Heart left ventricle (tissue), 16 donors: ENCODE measurements at regions of chr9 and their contacts with region 1.

Region 1: DNA sequence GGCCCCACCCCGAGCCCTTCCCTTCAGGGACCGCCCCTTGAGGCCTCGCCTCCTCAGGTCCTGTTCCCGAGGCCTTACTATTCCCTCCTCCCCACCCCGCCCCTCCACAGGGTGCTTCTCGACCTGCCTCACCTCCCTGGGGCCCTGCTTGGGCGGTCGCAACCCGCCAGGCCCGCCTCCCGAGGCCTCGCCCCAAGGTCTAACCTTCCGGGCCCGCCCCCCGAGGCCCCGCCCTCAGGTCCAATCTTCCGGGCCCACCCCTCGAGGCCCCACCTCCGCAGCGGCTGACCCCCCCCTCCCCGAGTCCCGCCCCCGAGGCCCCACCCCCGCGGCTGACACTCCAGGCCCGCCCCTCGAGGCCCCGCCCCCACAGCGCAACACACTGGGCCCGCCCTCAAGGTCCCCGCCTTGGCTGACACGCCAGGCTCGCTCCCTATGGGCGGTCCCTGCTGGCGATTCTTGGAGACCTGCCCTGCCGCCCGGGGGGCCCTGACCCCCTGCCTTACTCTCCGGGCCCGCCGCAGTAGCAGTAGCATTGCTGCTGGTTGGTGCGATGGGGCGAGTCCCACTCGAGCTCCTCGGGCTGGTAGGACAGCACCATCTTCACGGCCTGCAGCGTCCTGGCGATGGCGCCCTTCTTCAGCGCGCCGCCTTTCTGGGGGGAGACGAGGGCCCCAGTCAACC is 8.2 kb downstream of the PHF19 start:
- DNase-seq: peak; percentile 95 to 97 (median 96)
- ATAC-seq: peak; percentile 88 to 97 (median 95)
- H3K4me3 ChIP-seq: peak overlapping the region; percentile 26 to 87 (median 58)
- H3K27ac ChIP-seq: peak overlapping the region; percentile 69 to 93 (median 84)
- H3K4me1 ChIP-seq: peaks cover 0 to 20% (median 2%) of the 10 kb centered on the region in 12 donors
- H3K27me3 ChIP-seq: no peaks in the 10 kb centered on the region
- CTCF ChIP-seq: peak in 9 of 12 donors; percentile 28 to 76 (median 44)
- POLR2A ChIP-seq: no peak

Region 2: DNA sequence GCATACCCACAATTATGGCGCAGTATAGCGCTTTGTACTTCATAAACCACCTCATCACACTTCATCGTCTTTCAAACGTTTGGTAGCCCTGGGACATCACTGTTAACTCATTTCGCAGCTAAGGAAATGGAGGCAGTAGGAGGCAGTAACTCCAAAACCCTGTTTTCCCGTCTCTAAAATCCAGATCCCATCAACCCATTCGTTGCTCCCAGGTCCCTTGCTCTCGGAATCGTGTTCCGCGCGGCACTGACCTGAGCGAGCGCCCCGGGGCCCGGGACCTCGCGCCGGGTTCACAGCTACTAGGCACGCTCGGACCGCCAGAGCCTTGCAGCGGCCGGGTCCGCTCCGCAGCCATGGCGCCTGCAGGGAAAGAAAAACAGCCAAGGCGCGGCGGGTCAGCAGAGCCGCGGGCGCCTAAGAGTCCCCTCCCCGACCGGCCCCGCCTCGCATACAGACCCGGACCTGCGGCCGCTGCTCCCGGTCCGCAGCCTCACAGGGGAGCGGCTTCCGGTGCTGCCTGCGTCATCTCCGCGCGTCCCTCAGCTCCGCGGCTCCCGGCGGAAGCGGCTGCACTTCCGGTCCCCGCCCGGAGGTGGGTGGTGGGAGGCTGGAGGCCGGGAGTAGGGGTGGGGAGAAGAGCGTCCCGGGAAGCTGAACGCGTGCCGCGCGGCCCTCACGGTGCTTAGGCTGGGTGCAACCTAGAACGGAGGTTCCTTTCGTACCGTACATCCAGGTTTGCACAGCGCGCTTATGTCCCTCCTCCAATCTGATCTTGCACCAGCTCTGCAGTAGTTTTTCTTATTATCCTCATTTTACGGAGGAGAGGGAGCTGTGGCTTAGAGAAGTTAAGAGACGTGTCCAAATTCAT is 75.7 kb before region 1 on chr9 and contains the start of gene FBXW2:
- intact Hi-C with region 1: loop called in 1 of 10 experiments (anchors 1 kb)
- DNase-seq: peak; percentile 94 to 96 (median 95)
- ATAC-seq: peak; percentile 100
- H3K4me3 ChIP-seq: peak within 1 kb of the TSS; percentile 64 to 97 (median 82)
- H3K27ac ChIP-seq: peak within 1 kb of the TSS; percentile 45 to 96 (median 90)
- H3K4me1 ChIP-seq: peaks cover 3 to 51% (median 26%) of the 10 kb centered on the region in 12 donors
- H3K27me3 ChIP-seq: no peaks in the 10 kb centered on the region
- CTCF ChIP-seq: peak in 1 of 12 donors; percentile 6
- POLR2A ChIP-seq: peak in 1 of 2 donors; percentile 91
- total RNA-seq, gene FBXW2: 27.0 to 58.7 (median 42.0) TPM

Region 3: DNA sequence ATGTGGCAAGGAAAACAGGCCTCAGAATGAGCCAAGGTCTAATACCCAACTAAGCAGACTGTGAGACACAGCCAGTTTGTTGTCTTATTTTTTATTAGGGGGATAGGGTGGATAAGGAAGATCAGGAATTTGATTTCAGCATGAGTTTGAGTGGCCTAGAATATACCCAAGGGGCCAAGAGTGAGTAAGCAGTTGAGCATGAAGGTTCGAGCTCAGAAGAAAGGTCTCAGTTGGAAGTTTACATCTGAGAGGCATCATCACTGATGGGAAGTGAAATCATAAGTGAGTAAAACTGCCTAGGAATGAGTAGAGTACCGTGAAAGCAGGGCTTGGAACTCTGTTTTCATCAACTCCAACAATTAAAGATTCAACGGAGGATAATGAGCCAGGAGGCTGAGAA is 38.7 kb before region 1 on chr9:
- intact Hi-C with region 1: no loop called
- DNase-seq: no peak
- ATAC-seq: no peak
- H3K4me3 ChIP-seq: no peak overlapping the region
- H3K27ac ChIP-seq: no peak overlapping the region
- H3K4me1 ChIP-seq: no peaks in the 10 kb centered on the region
- H3K27me3 ChIP-seq: no peaks in the 10 kb centered on the region
- CTCF ChIP-seq: no peak
- POLR2A ChIP-seq: no peak

Region 4: DNA sequence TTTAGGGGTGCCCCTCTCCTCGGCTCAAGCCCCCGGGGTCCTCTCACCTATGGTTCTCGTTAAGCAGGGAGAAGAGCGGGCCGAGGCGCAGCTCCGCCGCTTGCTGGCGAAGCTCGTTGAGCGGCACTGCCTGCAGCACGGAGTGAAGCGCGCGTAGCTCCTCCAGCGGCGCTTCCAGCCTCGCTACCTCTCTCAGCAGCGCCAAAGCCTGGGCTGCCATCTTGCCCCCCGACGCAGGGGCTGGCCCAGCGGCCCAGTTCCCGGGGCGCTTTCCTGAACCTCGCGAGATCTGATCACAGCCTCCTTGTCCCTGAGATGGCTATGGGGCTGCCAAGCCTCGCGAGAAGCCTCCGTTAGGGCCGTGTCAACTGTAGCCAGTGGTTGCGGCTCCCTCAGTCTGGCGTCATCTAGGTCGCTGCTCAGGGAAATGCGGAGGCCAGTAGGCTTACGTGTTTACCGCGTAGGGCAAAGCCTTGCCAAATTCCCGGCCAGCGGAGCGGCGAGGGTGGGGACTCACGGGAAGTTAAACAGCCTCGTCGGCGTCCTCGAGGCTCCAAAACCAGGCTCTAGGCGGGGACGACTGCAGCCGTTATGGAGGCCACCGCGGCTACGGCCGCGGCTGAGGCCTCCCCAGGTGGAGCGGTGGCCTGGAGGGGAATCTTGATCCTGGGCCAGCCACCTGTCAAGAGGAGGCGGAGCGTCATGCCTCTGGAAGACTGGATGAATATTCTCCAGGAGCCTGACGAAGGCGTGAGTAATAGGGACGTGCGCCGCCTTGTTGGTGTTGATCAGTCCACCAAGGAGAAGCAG is 25.9 kb before region 1 on chr9 and contains the start of gene PSMD5:
- intact Hi-C with region 1: loop called in 2 of 10 experiments (anchors 1 to 2 kb)
- DNase-seq: peak; percentile 98 to 100 (median 99)
- ATAC-seq: peak; percentile 99
- H3K4me3 ChIP-seq: peak within 1 kb of the TSS; percentile 60 to 95 (median 78)
- H3K27ac ChIP-seq: peak within 1 kb of the TSS; percentile 83 to 99 (median 94)
- H3K4me1 ChIP-seq: peaks cover 0 to 44% (median 17%) of the 10 kb centered on the region in 12 donors
- H3K27me3 ChIP-seq: no peaks in the 10 kb centered on the region
- CTCF ChIP-seq: peak in 3 of 12 donors; percentile 11 to 27 (median 13)
- POLR2A ChIP-seq: peak; percentile 34 to 84
- total RNA-seq, gene PSMD5: 10.2 to 17.9 (median 13.4) TPM

Region 5: DNA sequence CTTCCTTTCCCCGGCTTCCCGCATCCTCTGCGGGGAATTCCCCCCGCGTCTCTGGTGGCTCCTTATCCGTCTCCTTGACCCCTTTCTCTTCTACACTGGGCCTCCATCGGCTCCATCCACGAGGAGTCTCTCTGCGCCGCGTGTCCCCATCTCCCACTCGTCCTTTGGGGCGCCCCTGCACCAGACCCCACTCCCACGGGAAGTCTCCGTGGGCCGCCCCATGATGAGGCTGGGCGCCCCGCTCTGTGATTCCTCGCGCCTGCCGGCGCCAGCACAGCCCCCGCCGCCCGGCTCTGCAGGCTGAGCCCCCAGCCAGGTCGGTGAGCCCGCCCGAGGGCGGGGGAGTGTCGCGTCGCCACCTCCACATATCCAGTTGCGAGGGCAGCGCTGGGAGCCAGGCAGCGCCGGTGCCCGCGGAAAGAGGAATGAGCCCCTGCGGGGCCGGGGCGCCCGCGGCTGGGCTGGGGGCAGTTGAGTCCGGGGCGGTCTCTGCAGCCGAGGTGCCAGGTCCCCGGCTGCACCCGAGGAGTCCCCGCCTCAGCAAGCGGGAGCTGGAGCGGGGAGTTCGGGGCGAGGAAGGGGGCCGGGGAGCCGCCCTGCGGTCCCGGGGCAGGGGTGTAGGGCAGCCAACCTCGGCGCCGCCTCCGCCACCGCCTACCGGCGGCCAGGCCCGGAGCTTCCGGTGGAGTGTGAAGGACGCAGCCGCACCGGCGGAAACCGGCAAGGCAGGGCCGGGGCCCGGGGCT is 59.8 kb after region 1 on chr9:
- intact Hi-C with region 1: loop called in 1 of 10 experiments (anchors 2 kb)
- DNase-seq: peak; percentile 80 to 92 (median 84)
- ATAC-seq: peak; percentile 75 to 93 (median 90)
- H3K4me3 ChIP-seq: peak overlapping the region; percentile 57 to 92 (median 78)
- H3K27ac ChIP-seq: peak overlapping the region; percentile 81 to 98 (median 92)
- H3K4me1 ChIP-seq: peaks cover 0 to 93% (median 32%) of the 10 kb centered on the region in 12 donors
- H3K27me3 ChIP-seq: no peaks in the 10 kb centered on the region
- CTCF ChIP-seq: peak in 5 of 12 donors; percentile 5 to 36 (median 17)
- POLR2A ChIP-seq: peak; percentile 5 to 53